Activated B cell treated with CpG ODN at 0.5 μM for 24 hours (primary cell): ENCODE measurements at regions of chrX and their contacts with region 1.

Region 1: DNA sequence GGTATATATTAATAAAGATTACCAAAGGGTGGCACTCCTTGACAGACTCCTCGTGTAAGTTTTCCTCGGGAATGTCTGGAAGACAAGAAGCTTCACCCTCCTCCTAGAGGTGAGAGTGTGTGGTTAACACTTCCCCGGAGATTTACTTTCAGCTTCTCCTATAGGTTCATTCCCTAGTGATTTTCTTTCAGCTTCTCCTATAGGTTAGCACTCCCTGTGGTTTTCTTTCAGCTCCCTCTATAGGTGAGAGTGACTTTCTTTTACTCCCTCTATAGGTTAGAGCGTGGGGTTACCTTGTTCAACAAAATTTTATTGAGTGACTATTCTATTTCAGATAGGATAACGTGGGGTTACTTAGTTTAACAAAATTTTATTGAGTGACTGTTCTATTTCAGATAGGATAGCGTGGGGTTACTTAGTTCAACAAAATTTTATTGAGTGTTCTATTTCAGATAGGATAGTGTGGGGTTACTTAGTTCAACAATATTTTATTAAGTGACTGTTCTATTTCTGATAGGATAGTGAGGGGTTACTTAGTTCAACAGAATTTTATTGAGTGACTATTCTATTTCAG is 106.0 kb upstream of the PLAC1 start:
- DNase-seq: no peak
- ATAC-seq: peak; percentile 60
- H3K4me3 Mint-ChIP-seq: no peak overlapping the region
- H3K27ac Mint-ChIP-seq: no peak overlapping the region
- H3K4me1 Mint-ChIP-seq: no peaks in the 10 kb centered on the region
- H3K27me3 Mint-ChIP-seq: no peaks in the 10 kb centered on the region
- CTCF ChIP-seq: no peak

Region 2: GRCh38 chrX:134520860-134521390 is 243.4 kb before region 1 on chrX:
- CTCF ChIA-PET with region 1: no interaction called
- POLR2A ChIA-PET with region 1: no interaction called
- intact Hi-C with region 1: loop called (anchors 5 kb)
- DNase-seq: no peak
- ATAC-seq: no peak
- H3K4me3 Mint-ChIP-seq: no peak overlapping the region
- H3K27ac Mint-ChIP-seq: no peak overlapping the region
- H3K4me1 Mint-ChIP-seq: no peaks in the 10 kb centered on the region
- H3K27me3 Mint-ChIP-seq: no peaks in the 10 kb centered on the region
- CTCF ChIP-seq: no peak